ENCODE measurements at regions of chr15 and their contacts with region 1.

Region 1: DNA sequence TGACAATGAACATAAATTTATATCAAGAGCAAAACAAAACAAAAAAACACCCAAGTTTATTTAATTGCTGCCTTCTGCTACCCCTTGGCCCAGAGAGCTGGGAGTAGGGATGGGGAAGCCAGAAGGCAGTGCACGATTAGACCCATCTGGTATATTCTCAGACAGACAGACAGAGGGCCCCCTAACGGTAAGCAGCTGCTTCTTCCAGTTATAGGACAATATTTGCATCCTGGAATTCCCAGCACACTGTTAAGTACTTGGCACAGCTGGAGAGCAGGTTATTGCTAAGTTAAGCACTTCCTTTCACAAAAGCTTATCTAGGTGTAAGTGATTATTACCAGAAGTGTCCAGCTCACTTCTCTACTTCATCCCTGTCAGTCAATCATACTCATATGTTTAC is 39.3 kb downstream of the C2CD4B start:
- DNase-seq: no peak
- H3K4me3 Mint-ChIP-seq: no peak overlapping the region
- H3K27ac Mint-ChIP-seq: peak overlapping the region; percentile 16
- H3K4me1 Mint-ChIP-seq: peaks cover 55% of the 10 kb centered on the region
- H3K27me3 Mint-ChIP-seq: no peaks in the 10 kb centered on the region

Region 2: GRCh38 chr15:62060113-62060895 is 65.5 kb before region 1 on chr15 and contains the start of gene VPS13C:
- CTCF ChIA-PET with region 1: interaction called, 19 read pairs
- POLR2A ChIA-PET with region 1: no interaction called
- intact Hi-C with region 1: no loop called
- DNase-seq: peak; percentile 95
- H3K4me3 Mint-ChIP-seq: peak within 1 kb of the TSS; percentile 88
- H3K27ac Mint-ChIP-seq: peak within 1 kb of the TSS; percentile 90
- H3K4me1 Mint-ChIP-seq: peaks cover 42% of the 10 kb centered on the region
- H3K27me3 Mint-ChIP-seq: peaks cover 2% of the 10 kb centered on the region
- total RNA-seq, gene VPS13C: 44.6 to 52.4 TPM

Region 3: GRCh38 chr15:62089616-62090015 is 36.2 kb before region 1 on chr15:
- CTCF ChIA-PET with region 1: no interaction called
- POLR2A ChIA-PET with region 1: no interaction called
- intact Hi-C with region 1: no loop called
- DNase-seq: no peak
- H3K4me3 Mint-ChIP-seq: no peak overlapping the region
- H3K27ac Mint-ChIP-seq: no peak overlapping the region
- H3K4me1 Mint-ChIP-seq: peaks cover 11% of the 10 kb centered on the region
- H3K27me3 Mint-ChIP-seq: peaks cover 3% of the 10 kb centered on the region

Region 4: GRCh38 chr15:62142731-62143130 is 17.0 kb after region 1 on chr15:
- CTCF ChIA-PET with region 1: interaction called, 12 read pairs
- POLR2A ChIA-PET with region 1: no interaction called
- intact Hi-C with region 1: no loop called
- DNase-seq: no peak
- H3K4me3 Mint-ChIP-seq: no peak overlapping the region
- H3K27ac Mint-ChIP-seq: no peak overlapping the region
- H3K4me1 Mint-ChIP-seq: peaks cover 5% of the 10 kb centered on the region
- H3K27me3 Mint-ChIP-seq: peaks cover 6% of the 10 kb centered on the region

Region 5: GRCh38 chr15:62153228-62153627 is 27.5 kb after region 1 on chr15:
- CTCF ChIA-PET with region 1: interaction called, 5 read pairs
- POLR2A ChIA-PET with region 1: no interaction called
- intact Hi-C with region 1: loop called (anchors 2 kb)
- DNase-seq: peak; percentile 59
- H3K4me3 Mint-ChIP-seq: no peak overlapping the region
- H3K27ac Mint-ChIP-seq: no peak overlapping the region
- H3K4me1 Mint-ChIP-seq: peaks cover 30% of the 10 kb centered on the region
- H3K27me3 Mint-ChIP-seq: peaks cover 10% of the 10 kb centered on the region

Region 6: DNA sequence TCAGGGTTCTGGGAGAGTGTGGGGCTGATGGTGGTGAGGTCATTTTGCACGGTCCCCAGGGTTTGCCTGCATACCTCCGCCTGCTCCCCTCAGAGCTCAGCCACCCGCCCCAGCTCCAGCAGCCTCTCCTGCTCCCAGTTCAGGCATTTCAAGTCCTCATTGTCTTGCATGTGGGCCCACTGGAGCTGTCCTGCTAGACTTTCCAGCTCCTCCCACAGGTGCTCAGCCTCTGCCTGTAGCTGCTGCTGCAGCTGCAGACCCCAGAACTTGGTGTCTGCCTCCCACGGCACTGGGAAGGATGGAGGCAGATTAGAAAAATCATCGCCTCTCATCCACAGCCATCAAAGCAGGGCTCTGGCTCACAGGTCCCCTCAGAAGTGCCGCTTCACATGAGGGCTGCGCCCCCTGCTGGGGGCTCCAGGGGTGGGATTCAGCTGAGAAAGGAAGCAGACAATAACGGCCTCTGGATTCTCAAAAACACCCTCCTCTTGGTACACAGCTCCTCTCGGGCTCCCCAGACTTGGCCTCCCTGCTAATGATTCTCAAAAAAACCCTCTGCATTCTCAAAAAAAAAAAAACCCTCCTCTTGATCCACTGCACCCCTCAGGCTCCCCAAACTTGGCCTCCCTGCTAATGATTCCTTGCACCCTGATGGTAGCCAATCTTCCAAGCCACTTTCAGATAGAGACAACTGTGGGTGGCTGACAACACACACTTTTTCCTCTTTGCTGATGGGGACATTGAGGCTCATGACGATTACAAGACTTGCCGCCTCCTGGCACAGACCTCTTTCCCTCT is 128.6 kb after region 1 on chr15:
- CTCF ChIA-PET with region 1: interaction called, 25 read pairs
- POLR2A ChIA-PET with region 1: no interaction called
- intact Hi-C with region 1: loop called (anchors 2 kb)
- DNase-seq: peak; percentile 79
- H3K4me3 Mint-ChIP-seq: no peak overlapping the region
- H3K27ac Mint-ChIP-seq: no peak overlapping the region
- H3K4me1 Mint-ChIP-seq: no peaks in the 10 kb centered on the region
- H3K27me3 Mint-ChIP-seq: peaks cover 7% of the 10 kb centered on the region

Region 7: GRCh38 chr15:63238796-63239195 is 1113.0 kb after region 1 on chr15:
- CTCF ChIA-PET with region 1: no interaction called
- POLR2A ChIA-PET with region 1: no interaction called
- intact Hi-C with region 1: loop called (anchors 5 kb)
- DNase-seq: peak; percentile 57
- H3K4me3 Mint-ChIP-seq: no peak overlapping the region
- H3K27ac Mint-ChIP-seq: no peak overlapping the region
- H3K4me1 Mint-ChIP-seq: peaks cover 68% of the 10 kb centered on the region
- H3K27me3 Mint-ChIP-seq: no peaks in the 10 kb centered on the region

Measured in activated CD4-positive, alpha-beta memory T cell treated with anti-CD3 and anti-CD28 coated beads for 36 hours (primary cell).